ENCODE measurements at regions of chr10 and their contacts with region 1.

Region 1: DNA sequence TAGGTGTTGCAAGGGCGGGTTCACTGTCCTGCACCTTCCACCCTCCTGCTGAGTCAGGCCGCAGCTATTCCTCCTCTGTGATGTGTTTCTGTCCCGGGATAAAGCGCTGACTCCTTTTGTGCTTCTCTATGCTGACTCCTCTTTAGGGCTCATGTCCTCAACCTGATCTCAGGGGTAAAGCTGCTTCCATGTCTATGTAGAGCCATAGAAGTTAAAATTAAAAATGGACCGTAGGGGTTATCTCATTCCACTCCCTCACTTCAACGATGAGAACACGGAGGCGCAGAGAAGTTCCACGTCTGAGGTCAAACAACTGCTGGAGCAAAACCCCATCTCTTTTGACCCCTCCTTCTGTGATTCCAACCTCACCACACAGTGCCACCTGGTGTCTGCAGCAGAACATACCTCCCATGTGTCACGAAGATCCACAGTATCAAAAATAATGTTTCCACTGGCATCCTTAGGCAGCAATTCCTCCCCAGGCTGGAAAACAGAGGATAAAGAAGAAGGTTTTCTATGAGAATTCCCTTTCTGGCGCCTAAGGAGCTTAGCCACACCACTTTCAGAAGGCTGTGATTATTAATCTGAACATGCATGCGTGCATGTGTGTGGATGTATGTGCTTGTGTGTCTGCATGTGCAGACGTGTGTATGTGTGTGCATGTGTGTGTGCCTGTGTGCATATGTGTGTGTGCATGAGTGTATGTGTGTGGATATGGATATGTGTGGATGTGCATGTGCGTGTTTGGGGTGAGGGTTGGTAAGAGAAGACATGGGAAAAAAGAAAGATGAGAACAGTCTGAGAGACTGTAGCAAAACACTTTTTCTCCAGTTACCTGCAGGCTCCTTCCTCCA is 81.2 kb upstream of the UCN3 start:
- DNase-seq: peak; percentile 69
- ATAC-seq: peak; percentile 92 to 94
- H3K4me3 ChIP-seq: no peak overlapping the region
- H3K27ac ChIP-seq: no peak overlapping the region
- H3K4me1 ChIP-seq: peaks cover 21% of the 10 kb centered on the region
- H3K27me3 ChIP-seq: no peaks in the 10 kb centered on the region
- CTCF ChIP-seq: peak; percentile 76

Region 2: GRCh38 chr10:5014936-5015335 is 268.6 kb before region 1 on chr10:
- intact Hi-C with region 1: loop called (anchors 5 kb)
- DNase-seq: no peak
- ATAC-seq: peak; percentile 55 to 73
- H3K4me3 ChIP-seq: no peak overlapping the region
- H3K27ac ChIP-seq: no peak overlapping the region
- H3K4me1 ChIP-seq: peaks cover 13% of the 10 kb centered on the region
- H3K27me3 ChIP-seq: no peaks in the 10 kb centered on the region
- CTCF ChIP-seq: peak; percentile 7

Region 3: DNA sequence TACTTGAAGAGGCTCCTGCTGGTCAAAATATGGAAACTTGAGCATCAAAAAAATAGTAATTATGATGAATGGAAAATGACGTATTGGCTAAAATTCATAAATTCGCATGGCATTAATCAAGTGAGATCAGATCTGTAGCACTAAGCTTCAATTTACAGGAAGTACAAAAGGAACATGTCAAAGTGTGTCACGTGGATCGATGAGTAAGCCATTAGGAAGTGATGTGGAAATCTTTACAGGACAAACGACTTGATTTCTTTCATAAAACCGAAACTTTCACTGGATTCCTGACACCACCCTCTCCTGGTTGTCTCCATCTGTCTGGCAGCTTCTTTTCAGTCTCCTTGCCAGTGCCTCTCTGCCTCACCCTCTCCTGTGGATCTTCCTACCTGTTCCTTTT is 124.4 kb before region 1 on chr10:
- intact Hi-C with region 1: no loop called
- DNase-seq: no peak
- ATAC-seq: no peak
- H3K4me3 ChIP-seq: no peak overlapping the region
- H3K27ac ChIP-seq: no peak overlapping the region
- H3K4me1 ChIP-seq: no peaks in the 10 kb centered on the region
- H3K27me3 ChIP-seq: no peaks in the 10 kb centered on the region
- CTCF ChIP-seq: no peak

Region 4: GRCh38 chr10:5344746-5345145 is 61.2 kb after region 1 on chr10:
- intact Hi-C with region 1: no loop called
- DNase-seq: no peak
- ATAC-seq: peak; percentile 59 to 78
- H3K4me3 ChIP-seq: no peak overlapping the region
- H3K27ac ChIP-seq: no peak overlapping the region
- H3K4me1 ChIP-seq: no peaks in the 10 kb centered on the region
- H3K27me3 ChIP-seq: no peaks in the 10 kb centered on the region
- CTCF ChIP-seq: no peak

Measured in lower lobe of right lung (tissue), 2 donors.